Body of pancreas (tissue), 4 donors: ENCODE measurements at regions of chr20 and their contacts with region 1.

Region 1: GRCh38 chr20:23349338-23350195 is 1.0 kb upstream of the NXT1 start:
- DNase-seq: peak in 3 of 4 donors; percentile 73 to 88 (median 75)
- ATAC-seq: peak; percentile 60
- H3K4me3 ChIP-seq: peak overlapping the region; percentile 21 to 26
- H3K27ac ChIP-seq: peak overlapping the region; percentile 93 to 99 (median 98)
- H3K4me1 ChIP-seq: peaks cover 18% of the 10 kb centered on the region
- H3K27me3 ChIP-seq: no peaks in the 10 kb centered on the region
- CTCF ChIP-seq: peak in 6 of 7 experiments; percentile 18 to 67 (median 56)
- POLR2A ChIP-seq: no peak

Region 2: DNA sequence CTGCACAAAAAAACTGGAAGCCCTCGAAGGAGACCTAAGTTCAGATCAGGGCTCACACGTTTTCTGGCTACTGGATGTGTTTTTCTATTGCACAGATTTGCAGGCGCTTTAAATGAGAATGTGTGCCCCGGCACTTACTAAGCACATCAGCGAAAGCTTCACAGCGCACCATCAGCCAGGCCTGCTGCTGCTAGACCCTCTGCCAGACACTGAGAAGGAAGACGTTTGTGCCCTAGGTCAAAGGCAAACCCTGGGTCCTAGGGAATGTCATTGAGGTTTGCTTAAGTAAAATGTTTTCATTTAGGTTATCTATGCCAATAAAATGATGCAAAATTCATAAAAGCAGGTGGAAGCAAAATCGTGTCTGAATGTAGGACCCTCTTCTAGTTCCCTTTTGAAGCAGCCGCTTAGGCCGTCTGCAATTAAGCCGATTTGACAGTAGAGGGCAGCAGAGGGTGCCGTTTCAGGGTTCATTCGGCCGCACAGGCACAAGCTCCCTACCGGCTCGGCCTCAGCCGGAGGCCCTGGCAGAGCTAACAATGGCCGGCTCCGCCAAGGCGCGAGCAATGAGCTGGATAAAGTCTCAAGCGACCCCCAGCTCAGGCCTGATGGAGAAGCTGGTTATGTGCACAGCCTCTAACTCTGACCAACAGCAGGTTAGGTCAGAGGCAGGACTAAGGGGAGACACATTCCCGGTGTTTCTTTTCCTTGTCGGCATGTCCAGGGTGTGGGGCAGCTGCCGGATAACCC is 658.0 kb before region 1 on chr20:
- intact Hi-C with region 1: loop called (anchors 10 kb)
- DNase-seq: peak; percentile 75 to 82 (median 82)
- ATAC-seq: peak; percentile 93
- H3K4me3 ChIP-seq: no peak overlapping the region
- H3K27ac ChIP-seq: no peak overlapping the region
- H3K4me1 ChIP-seq: no peaks in the 10 kb centered on the region
- H3K27me3 ChIP-seq: no peaks in the 10 kb centered on the region
- CTCF ChIP-seq: peak; percentile 81 to 92 (median 87)
- POLR2A ChIP-seq: no peak

Region 3: GRCh38 chr20:23419995-23420901 is 70.7 kb after region 1 on chr20:
- intact Hi-C with region 1: loop called (anchors 10 kb)
- DNase-seq: peak; percentile 65 to 84 (median 76)
- ATAC-seq: peak; percentile 57
- H3K4me3 ChIP-seq: peak overlapping the region; percentile 95 to 96
- H3K27ac ChIP-seq: peak overlapping the region; percentile 67 to 88 (median 86)
- H3K4me1 ChIP-seq: peaks cover 23% of the 10 kb centered on the region
- H3K27me3 ChIP-seq: no peaks in the 10 kb centered on the region
- CTCF ChIP-seq: no peak
- POLR2A ChIP-seq: peak in 1 of 3 donors; percentile 10